Caco-2 (cell line): ENCODE measurements at regions of chr6 and their contacts with region 1.

Region 1: DNA sequence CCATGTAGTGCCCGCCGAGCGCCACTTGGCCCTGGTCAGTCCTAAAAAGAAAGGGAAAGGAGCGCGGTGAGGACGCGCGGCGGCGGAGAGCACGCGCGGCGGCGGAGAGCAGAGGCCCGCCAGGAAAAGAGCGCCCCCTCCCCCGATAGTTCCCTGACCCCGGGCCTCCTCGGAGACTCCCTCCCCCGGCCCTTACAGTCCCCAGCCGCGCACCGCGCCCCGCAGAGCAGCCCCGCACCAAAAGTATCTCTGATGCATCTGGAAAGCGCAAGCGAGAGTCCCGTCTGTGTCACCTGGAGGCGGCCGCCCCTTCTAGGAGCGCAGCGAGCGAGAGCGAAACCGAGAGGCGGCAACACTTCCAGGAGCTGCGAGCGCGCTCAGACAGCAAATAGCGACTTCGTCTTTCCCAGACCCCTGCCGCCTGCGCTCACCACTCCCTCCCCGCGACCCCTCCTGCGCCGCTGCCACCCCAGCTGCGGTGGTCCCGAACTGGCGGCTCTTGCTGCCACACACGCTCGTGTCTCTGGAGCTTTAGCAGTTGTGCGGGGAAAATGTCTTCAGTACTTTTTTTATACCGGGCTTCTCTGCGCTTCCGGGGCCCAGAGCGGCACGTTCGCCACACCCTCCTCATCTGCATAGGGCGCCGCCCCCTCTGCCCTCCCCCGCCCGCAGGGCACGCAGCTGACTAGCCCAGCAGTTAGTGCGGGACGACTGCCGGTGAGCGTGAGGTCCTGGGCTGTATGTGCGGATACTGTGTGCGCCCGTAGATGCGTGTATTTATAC is at the start of gene TENT5A:
- DNase-seq: peak; percentile 96
- H3K4me3 ChIP-seq: peak within 1 kb of the TSS; percentile 89
- H3K4me3 Mint-ChIP-seq: peak within 1 kb of the TSS; percentile 95
- H3K27ac Mint-ChIP-seq: peak within 1 kb of the TSS; percentile 73
- H3K4me1 ChIP-seq: peaks cover 22% of the 10 kb centered on the region
- H3K4me1 Mint-ChIP-seq: peaks cover 33% of the 10 kb centered on the region
- H3K27me3 ChIP-seq: no peaks in the 10 kb centered on the region
- H3K27me3 Mint-ChIP-seq: no peaks in the 10 kb centered on the region
- CTCF ChIP-seq: peak; percentile 18 to 44
- total RNA-seq, gene TENT5A: 45.0 and 49.6 TPM in 2 replicates

Region 2: GRCh38 chr6:80742481-80742880 is 1009.8 kb before region 1 on chr6:
- CTCF ChIA-PET with region 1: no interaction called
- POLR2A ChIA-PET with region 1: no interaction called
- intact Hi-C with region 1: loop called (anchors 10 kb)
- DNase-seq: peak in 1 of 2 experiments; percentile 27
- H3K4me3 ChIP-seq: no peak overlapping the region
- H3K4me3 Mint-ChIP-seq: no peak overlapping the region
- H3K27ac Mint-ChIP-seq: no peak overlapping the region
- H3K4me1 ChIP-seq: no peaks in the 10 kb centered on the region
- H3K4me1 Mint-ChIP-seq: no peaks in the 10 kb centered on the region
- H3K27me3 ChIP-seq: no peaks in the 10 kb centered on the region
- H3K27me3 Mint-ChIP-seq: no peaks in the 10 kb centered on the region
- CTCF ChIP-seq: peak; percentile 40 to 49

Region 3: DNA sequence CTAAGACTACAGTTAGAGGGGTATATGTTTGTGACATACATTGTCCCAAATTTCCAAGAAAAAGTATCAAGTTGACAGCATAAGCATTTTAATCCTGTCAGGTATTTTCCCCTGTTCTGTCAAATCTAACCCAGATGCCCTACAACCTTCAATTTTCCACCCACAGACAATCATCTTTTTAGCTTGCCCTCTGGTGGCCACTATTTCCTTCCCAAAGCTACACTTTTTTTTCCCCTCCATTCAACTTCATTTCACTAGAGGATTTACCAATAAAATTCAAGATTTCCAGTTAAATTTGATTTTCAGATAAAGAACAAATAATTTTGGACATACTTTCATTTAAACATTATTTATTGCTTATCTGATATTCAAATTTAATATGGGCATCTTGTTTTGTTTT is 286.5 kb before region 1 on chr6:
- CTCF ChIA-PET with region 1: no interaction called
- POLR2A ChIA-PET with region 1: no interaction called
- intact Hi-C with region 1: loop called (anchors 5 kb)
- DNase-seq: peak in 1 of 2 experiments; percentile 30
- H3K4me3 ChIP-seq: no peak overlapping the region
- H3K4me3 Mint-ChIP-seq: no peak overlapping the region
- H3K27ac Mint-ChIP-seq: no peak overlapping the region
- H3K4me1 ChIP-seq: no peaks in the 10 kb centered on the region
- H3K4me1 Mint-ChIP-seq: no peaks in the 10 kb centered on the region
- H3K27me3 ChIP-seq: no peaks in the 10 kb centered on the region
- H3K27me3 Mint-ChIP-seq: no peaks in the 10 kb centered on the region
- CTCF ChIP-seq: peak; percentile 51 to 75

Region 4: GRCh38 chr6:81589461-81590323 is 162.6 kb before region 1 on chr6:
- CTCF ChIA-PET with region 1: interaction called, 6 read pairs
- POLR2A ChIA-PET with region 1: no interaction called
- intact Hi-C with region 1: loop called (anchors 1 kb)
- DNase-seq: peak; percentile 49 to 59
- H3K4me3 ChIP-seq: no peak overlapping the region
- H3K4me3 Mint-ChIP-seq: no peak overlapping the region
- H3K27ac Mint-ChIP-seq: peak overlapping the region; percentile 29
- H3K4me1 ChIP-seq: peaks cover 22% of the 10 kb centered on the region
- H3K4me1 Mint-ChIP-seq: peaks cover 18% of the 10 kb centered on the region
- H3K27me3 ChIP-seq: no peaks in the 10 kb centered on the region
- H3K27me3 Mint-ChIP-seq: no peaks in the 10 kb centered on the region
- CTCF ChIP-seq: peak in 1 of 2 experiments; percentile 50

Region 5: GRCh38 chr6:81655696-81656095 is 96.6 kb before region 1 on chr6:
- CTCF ChIA-PET with region 1: interaction called, 17 read pairs
- POLR2A ChIA-PET with region 1: no interaction called
- intact Hi-C with region 1: no loop called
- DNase-seq: no peak
- H3K4me3 ChIP-seq: no peak overlapping the region
- H3K4me3 Mint-ChIP-seq: no peak overlapping the region
- H3K27ac Mint-ChIP-seq: no peak overlapping the region
- H3K4me1 ChIP-seq: 0 out of 2 replicates have a peak, but pooled peaks cover 5% of the 10 kb centered on the region
- H3K4me1 Mint-ChIP-seq: no peaks in the 10 kb centered on the region
- H3K27me3 ChIP-seq: no peaks in the 10 kb centered on the region
- H3K27me3 Mint-ChIP-seq: no peaks in the 10 kb centered on the region
- CTCF ChIP-seq: no peak

Region 6: DNA sequence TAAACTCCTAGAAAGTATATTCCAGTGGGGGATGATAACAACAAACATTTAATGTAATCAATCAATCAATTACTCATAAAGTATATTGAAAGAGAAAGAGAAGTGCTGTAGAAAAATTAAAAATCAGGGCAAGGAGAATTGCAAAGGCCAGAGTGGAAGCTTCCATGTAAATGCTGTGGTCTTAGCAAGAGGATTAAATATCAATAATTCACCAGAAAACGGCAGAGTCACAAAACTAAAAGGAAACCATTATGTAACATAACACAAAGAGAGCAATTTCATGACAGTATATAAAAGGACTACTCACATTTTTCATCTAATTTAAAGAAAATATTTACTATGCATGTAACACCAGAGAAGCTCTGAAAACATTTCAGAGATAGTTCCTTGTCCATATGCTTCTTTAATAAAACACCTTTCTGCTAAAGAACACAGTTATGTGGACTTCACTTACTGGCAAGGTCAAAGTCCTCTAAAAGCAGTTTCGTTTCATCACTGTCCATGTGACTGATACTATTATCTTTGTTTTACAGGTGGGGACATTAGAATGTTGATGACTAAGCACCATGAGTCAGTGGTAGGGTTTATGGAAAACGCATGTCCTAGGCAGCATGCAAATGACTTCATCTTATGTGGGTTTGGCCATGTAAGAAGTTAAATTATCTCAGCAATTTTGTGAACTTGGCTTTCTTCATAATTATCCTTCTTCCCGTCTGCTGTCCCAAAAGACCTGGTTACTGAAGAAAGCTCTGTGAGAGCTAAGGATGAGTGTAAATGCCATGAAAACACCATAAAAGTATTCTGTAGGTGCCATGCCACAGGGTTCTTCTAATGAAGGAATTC is 185.9 kb after region 1 on chr6:
- CTCF ChIA-PET with region 1: no interaction called
- POLR2A ChIA-PET with region 1: interaction called, 3 read pairs
- intact Hi-C with region 1: loop called (anchors 1 kb)
- DNase-seq: peak; percentile 69 to 72
- H3K4me3 ChIP-seq: peak overlapping the region; percentile 12; the same call in 1 of the 2 replicates
- H3K4me3 Mint-ChIP-seq: peak overlapping the region; percentile 64
- H3K27ac Mint-ChIP-seq: peak overlapping the region; percentile 95
- H3K4me1 ChIP-seq: peaks cover 55% of the 10 kb centered on the region
- H3K4me1 Mint-ChIP-seq: peaks cover 40% of the 10 kb centered on the region
- H3K27me3 ChIP-seq: no peaks in the 10 kb centered on the region
- H3K27me3 Mint-ChIP-seq: no peaks in the 10 kb centered on the region
- CTCF ChIP-seq: no peak

Region 7: GRCh38 chr6:82129797-82130196 is 377.5 kb after region 1 on chr6:
- CTCF ChIA-PET with region 1: no interaction called
- POLR2A ChIA-PET with region 1: no interaction called
- intact Hi-C with region 1: no loop called
- DNase-seq: no peak
- H3K4me3 ChIP-seq: no peak overlapping the region
- H3K4me3 Mint-ChIP-seq: no peak overlapping the region
- H3K27ac Mint-ChIP-seq: no peak overlapping the region
- H3K4me1 ChIP-seq: no peaks in the 10 kb centered on the region
- H3K4me1 Mint-ChIP-seq: peaks cover 5% of the 10 kb centered on the region
- H3K27me3 ChIP-seq: no peaks in the 10 kb centered on the region
- H3K27me3 Mint-ChIP-seq: no peaks in the 10 kb centered on the region
- CTCF ChIP-seq: no peak

Region 8: DNA sequence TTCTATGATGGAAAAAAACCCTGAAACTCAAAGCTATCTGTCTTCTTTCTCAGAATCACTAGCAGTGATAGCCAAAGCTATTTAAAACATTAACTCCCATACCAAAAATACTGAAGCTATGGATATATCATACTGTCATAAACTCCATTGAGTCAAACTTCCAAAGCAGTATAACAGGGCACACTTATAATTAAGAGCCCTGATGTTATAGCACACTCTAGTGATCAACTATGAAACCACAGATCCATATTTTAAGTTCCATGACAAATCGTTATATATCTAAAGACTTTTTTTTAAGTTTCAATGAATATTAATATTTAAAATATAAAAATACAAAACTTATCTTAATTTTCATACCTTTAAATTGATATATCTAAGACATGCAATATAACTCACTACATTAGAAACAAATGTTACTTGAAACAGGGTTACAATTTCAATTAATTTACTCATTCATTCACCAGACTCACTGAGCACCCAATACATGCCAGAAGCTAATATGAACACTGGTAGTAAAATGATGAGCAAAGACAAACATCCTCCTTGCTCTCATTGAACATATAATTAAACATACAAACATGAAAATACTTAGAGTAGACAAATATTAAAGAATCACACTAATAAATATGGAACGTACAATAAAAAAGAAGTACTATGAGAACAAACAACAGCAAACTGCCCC is 425.9 kb after region 1 on chr6:
- CTCF ChIA-PET with region 1: no interaction called
- POLR2A ChIA-PET with region 1: no interaction called
- intact Hi-C with region 1: loop called (anchors 2 kb)
- DNase-seq: no peak
- H3K4me3 ChIP-seq: no peak overlapping the region
- H3K4me3 Mint-ChIP-seq: no peak overlapping the region
- H3K27ac Mint-ChIP-seq: no peak overlapping the region
- H3K4me1 ChIP-seq: peaks cover 15% of the 10 kb centered on the region
- H3K4me1 Mint-ChIP-seq: peaks cover 13% of the 10 kb centered on the region
- H3K27me3 ChIP-seq: no peaks in the 10 kb centered on the region
- H3K27me3 Mint-ChIP-seq: no peaks in the 10 kb centered on the region
- CTCF ChIP-seq: peak; percentile 36 to 50

Region 9: DNA sequence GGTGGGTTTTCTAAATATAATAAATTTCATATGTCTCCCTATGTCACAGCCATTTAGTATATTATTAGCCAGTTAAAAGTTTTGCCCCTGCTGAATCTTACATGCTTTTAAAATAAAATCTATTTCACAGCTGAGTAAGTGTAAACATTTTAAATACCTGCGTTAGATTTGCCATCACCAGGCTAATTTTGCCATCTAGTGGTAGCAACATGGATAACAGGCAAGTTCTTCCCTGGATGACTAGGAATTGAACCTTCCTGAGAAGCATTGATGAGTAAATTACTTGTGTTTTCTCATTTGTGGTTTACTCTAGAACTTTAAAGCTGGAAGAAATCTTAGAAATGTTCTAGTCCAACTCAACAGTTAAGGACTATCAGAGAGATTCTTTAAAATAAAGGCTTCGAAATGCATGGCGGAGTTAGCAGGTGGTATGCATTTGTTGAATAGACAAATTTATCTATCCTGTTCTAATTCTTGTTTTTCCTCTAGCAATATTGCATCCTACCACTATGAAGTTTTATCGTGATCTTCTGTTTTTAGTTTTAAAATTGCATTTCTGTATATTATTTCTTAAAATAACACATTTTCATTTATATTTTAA is 1762.6 kb after region 1 on chr6:
- CTCF ChIA-PET with region 1: no interaction called
- POLR2A ChIA-PET with region 1: no interaction called
- intact Hi-C with region 1: no loop called
- DNase-seq: peak; percentile 46 to 67
- H3K4me3 ChIP-seq: no peak overlapping the region
- H3K4me3 Mint-ChIP-seq: peak overlapping the region; percentile 84
- H3K27ac Mint-ChIP-seq: no peak overlapping the region
- H3K4me1 ChIP-seq: peaks cover 19% of the 10 kb centered on the region
- H3K4me1 Mint-ChIP-seq: peaks cover 25% of the 10 kb centered on the region
- H3K27me3 ChIP-seq: no peaks in the 10 kb centered on the region
- H3K27me3 Mint-ChIP-seq: no peaks in the 10 kb centered on the region
- CTCF ChIP-seq: peak; percentile 76 to 86